Naive thymus-derived CD8-positive, alpha-beta T cell (primary cell): ENCODE measurements at regions of chr15 and their contacts with region 1.

Region 1: DNA sequence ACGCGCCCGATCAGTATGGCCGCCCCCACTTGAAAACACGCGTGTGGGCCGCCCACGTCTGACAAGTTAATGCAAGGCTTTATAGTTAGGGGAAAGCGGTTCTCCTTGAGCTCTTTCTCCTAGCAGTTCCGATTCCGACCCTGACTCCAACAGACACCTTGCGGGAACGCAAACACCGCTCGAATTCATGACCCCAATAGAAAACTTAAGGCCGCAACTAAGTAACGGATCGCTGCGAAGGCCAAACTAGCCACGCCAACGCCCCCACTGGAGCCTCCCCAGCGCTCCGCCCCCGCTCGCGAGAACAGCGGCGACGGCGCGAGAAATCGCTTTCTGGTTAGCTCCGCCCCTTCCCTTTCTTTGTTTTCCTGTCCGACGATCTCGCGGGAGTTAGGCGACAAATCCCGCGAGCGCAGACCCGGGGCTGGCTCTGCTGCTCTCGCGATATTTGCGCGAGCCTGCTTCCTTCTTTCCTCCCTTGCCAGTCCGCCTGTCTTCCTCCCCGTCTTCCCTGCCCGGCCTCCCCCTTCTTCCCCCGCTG is at the start of gene IREB2:
- DNase-seq: peak; percentile 94 to 99 (median 98)
- ATAC-seq: peak; percentile 83 to 89
- H3K4me3 Mint-ChIP-seq: peak within 1 kb of the TSS; percentile 83 to 99 (median 97)
- H3K27ac Mint-ChIP-seq: peak within 1 kb of the TSS; percentile 96 to 99 (median 97)
- H3K4me1 Mint-ChIP-seq: peaks cover 10 to 57% (median 39%) of the 10 kb centered on the region in 4 donors
- H3K27me3 Mint-ChIP-seq: no peaks in the 10 kb centered on the region
- polyA plus RNA-seq, gene IREB2: 15.7 to 23.1 (median 16.6) TPM

Region 2: GRCh38 chr15:78264304-78265136 is 173.3 kb before region 1 on chr15 and contains the start of gene DNAJA4:
- POLR2A ChIA-PET with region 1: interaction called, 25 read pairs
- DNase-seq: peak; percentile 59 to 85 (median 68)
- ATAC-seq: peak; percentile 83 to 84
- H3K4me3 Mint-ChIP-seq: peak within 1 kb of the TSS; percentile 84 to 94 (median 90)
- H3K27ac Mint-ChIP-seq: peak within 1 kb of the TSS; percentile 80 to 98 (median 94)
- H3K4me1 Mint-ChIP-seq: peaks cover 21 to 41% (median 31%) of the 10 kb centered on the region in 4 donors
- H3K27me3 Mint-ChIP-seq: no peaks in the 10 kb centered on the region
- polyA plus RNA-seq, gene DNAJA4: 7.9 to 15.6 (median 9.1) TPM

Region 3: DNA sequence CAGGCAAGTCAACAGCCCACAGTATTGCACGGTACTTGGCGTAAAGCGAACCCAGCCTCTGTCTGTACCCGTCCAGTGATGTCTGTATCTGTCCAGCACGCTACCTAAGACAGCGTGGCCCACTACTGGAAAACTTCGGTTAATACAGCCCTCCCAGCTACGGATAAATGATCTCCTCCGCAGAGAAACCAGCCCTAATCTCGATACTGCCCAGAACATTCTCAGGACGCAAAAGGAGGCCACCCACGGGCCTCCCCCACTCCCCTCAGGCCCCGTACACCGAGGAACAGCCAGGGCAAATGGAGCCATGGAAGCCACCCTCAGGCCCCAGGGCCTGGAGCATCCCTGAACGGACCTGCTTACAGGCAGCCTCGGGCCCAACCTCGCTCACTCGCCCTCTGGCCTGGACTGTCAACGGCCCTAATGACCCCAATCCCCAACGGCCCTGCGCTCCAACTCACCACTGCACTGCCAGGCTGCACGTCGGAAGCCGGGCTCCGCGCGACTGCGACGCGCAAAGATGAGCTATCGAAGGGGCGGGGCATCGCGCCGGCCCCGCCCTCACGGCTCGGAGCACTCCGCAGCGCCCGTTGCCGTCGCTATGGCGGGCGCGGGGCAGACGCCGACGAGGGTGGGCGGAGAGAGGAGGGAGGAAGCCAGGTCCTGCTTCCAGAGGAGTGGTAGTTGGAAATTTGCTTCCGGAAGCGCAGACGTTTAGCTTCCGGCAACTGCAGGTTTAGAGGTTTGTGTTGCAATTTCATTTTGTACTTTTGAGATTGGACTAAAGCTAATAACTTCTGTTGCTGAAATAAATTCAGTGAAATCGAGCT is 138.5 kb before region 1 on chr15 and contains the start of gene SKIC8:
- POLR2A ChIA-PET with region 1: interaction called, 22 read pairs
- DNase-seq: peak; percentile 84 to 92 (median 90)
- ATAC-seq: peak; percentile 97
- H3K4me3 Mint-ChIP-seq: peak within 1 kb of the TSS; percentile 91 to 98 (median 97)
- H3K27ac Mint-ChIP-seq: peak within 1 kb of the TSS; percentile 88 to 98 (median 95)
- H3K4me1 Mint-ChIP-seq: peaks cover 17 to 34% (median 25%) of the 10 kb centered on the region in 4 donors
- H3K27me3 Mint-ChIP-seq: no peaks in the 10 kb centered on the region
- polyA plus RNA-seq, gene SKIC8: 98.8 to 117 (median 107) TPM

Region 4: DNA sequence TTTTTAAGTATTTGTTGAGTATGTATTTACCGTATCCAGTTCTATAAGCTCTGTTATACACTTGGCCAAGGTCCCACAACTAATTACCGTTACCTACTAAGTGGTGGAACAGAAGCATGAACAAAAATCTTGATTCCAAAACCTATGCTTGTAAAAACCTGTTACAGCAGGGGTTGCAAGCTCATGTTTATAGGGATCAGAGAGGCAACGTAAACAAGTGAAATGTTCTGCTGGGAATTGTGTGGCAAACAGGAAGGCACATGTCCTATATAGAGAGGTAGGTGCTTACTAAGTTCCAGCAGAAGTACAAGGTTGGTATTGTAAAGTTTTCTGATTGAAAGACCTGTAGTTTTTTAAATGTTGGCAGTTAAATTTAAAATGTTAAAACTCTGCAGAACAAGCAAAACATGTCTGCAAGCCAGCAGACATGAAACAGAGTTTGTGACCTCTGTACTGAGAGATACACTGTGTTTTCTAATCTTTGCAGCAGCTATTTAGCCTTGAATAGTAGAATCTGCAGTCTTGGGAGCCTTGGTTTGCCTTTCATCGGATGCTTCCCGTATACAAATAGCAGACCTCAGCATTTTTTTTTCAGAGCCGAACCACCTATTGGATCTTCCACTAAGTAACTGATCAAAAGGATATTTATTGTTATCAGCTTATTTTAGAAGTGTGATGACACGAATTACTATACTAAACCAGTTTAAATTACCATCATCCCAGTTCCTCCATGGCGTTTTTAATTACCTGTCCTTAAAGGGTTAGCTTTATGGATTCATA is 11.6 kb after region 1 on chr15:
- POLR2A ChIA-PET with region 1: interaction called, 20 read pairs
- DNase-seq: no peak
- ATAC-seq: no peak
- H3K4me3 Mint-ChIP-seq: no peak overlapping the region
- H3K27ac Mint-ChIP-seq: peak overlapping the region in 1 of 10 donors; percentile 12
- H3K4me1 Mint-ChIP-seq: peaks cover 45 to 84% (median 79%) of the 10 kb centered on the region in 4 donors
- H3K27me3 Mint-ChIP-seq: no peaks in the 10 kb centered on the region

Region 5: DNA sequence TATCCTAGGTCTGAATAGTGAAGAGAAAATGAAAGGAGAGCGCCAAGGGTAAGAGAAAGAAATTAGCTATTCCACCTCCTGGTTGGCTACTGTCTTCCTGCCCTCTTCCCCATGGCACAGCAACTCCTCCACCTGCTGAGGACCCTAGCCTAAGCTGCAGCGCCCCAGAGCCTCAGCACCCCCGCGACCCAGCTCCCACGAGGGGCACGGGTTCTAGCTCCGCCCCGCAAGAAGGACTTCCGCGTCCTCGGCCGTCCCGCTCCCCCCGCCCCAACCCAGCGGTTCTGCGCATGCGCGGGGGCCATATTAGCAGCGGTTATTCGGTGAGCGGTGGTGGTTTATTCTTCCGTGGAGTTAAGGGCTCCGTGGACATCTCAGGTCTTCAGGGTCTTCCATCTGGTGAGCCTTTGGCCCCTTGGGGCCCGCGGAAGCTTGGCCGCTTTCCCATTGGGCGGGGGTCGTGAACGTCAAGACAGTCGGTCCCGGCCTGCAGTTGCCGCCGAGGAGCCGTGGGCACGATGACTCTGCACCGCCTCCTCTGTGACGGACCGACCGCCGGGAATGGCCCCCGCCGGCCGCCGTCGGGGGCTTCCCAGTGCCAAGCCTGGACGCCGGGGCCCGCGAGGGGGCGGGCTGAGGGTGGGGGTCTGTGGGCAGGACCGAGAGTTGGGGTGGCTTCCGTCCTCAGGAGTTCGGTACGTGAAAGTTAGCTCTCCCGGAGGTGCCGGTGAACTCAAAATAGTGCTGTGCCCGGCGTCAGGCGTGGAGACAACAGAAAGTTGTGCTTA is 102.5 kb after region 1 on chr15 and contains the start of gene PSMA4:
- POLR2A ChIA-PET with region 1: interaction called, 31 read pairs
- DNase-seq: peak; percentile 85 to 99 (median 94)
- ATAC-seq: peak; percentile 87
- H3K4me3 Mint-ChIP-seq: peak within 1 kb of the TSS; percentile 87 to 99 (median 96)
- H3K27ac Mint-ChIP-seq: peak within 1 kb of the TSS; percentile 98 to 100 (median 99)
- H3K4me1 Mint-ChIP-seq: peaks cover 12 to 33% (median 28%) of the 10 kb centered on the region in 4 donors
- H3K27me3 Mint-ChIP-seq: no peaks in the 10 kb centered on the region
- polyA plus RNA-seq, gene PSMA4: 170 to 218 (median 190) TPM